H1 (cell line): ENCODE measurements at regions of chr18 and their contacts with region 1.

Region 1: DNA sequence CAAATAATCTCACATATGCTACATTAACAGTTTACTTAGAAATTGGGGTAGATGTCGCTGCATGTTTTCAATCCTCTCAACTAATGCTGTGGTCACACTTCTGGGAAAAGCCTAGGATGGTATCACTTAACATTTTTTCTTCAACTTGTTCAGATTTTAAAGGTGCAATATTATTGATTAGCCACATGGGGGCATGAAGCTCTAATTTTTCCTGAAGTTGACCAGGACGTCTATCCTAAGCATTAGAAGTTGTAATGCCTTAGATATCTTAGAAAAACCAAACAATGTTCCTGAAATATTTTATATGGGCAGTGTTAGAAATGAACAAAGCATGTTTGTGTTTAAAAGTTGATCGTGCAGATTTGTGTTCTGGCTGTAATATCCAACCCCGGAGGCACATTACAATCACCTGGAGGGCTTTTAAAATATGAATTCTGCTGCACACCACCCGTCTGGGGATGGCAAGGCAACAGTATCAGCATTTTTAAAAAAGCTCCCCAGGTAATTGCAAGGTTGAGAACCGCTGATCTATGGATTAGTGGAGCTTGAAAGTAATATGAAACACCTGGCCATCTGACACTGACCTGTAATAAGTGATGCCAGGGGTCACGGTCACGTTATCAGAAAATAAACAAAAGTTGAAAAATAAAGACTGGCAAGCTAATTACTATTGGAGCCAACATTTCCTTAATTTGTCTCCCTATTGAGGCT is 100.5 kb upstream of the LMAN1 start:
- DNase-seq: no peak
- H3K4me3 ChIP-seq: no peak overlapping the region
- H3K27ac ChIP-seq: no peak overlapping the region
- H3K4me1 ChIP-seq: peaks cover 0 to 2% (median 0%) of the 10 kb centered on the region in 4 experiments; a peak in 1 of 7 replicates
- H3K27me3 ChIP-seq: no peaks in the 10 kb centered on the region
- CTCF ChIP-seq: peak in 2 of 3 experiments; percentile 25 to 60; a peak in 2 of 4 replicates
- EP300 ChIP-seq: no peak
- POLR2A ChIP-seq: no peak
- RAD21 ChIP-seq: peak; percentile 71 to 76

Region 2: DNA sequence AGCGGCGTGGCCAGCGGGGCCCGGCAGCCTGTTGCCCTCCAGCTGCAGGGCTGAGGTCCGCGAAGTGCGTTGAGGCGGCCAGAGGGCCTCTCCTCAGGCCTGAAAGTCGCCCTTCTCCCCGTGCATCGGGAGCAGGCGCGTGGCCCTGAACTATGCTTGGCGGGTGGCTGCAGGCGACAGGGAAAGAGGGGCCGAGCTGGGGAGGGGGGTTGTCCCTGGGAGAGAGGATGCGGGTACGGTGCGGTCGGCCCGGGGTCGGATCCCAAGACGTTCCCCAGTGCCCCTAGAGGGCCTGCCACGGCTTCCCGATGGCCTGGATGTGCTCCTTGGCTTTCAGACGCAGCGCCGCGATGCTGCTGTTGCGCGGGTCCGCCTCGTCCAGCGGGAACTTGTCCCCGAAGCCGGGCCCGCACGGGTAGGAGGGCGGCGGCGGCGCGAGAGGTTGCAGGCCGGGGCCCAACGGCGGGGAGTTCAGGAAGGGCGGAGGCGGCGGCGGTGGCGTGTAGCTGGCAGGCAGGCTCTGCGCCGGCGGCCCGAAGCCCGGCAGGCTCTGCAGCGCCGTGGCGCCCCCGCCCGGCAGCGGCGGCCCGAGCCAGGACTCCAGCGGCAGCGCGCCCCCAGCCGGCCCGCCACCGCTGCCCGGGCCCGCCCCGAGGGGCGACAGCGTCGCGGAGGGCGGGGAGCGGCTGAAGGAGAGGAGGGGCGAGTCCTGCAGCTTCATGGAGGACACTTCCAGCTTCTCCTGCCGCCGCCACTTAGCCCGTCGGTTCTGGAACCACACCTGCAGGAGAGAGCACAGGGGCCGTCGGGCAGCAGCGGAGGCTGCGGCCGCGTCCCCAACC is 190.6 kb before region 1 on chr18:
- CTCF ChIA-PET with region 1: no interaction called
- POLR2A ChIA-PET with region 1: no interaction called
- DNase-seq: peak in 1 of 2 experiments; percentile 89
- H3K4me3 ChIP-seq: peak overlapping the region; percentile 51 to 67 (median 61)
- H3K27ac ChIP-seq: no peak overlapping the region
- H3K4me1 ChIP-seq: peaks cover 0 to 44% (median 24%) of the 10 kb centered on the region in 4 experiments; a peak in 6 of 7 replicates
- H3K27me3 ChIP-seq: peaks cover 88 to 98% (median 93%) of the 10 kb centered on the region in 4 experiments
- CTCF ChIP-seq: peak in 2 of 3 experiments; percentile 52 to 92; a peak in 3 of 4 replicates
- EP300 ChIP-seq: no peak
- POLR2A ChIP-seq: no peak
- RAD21 ChIP-seq: peak in 1 of 2 experiments; percentile 47; a peak in 2 of 4 replicates

Region 3: DNA sequence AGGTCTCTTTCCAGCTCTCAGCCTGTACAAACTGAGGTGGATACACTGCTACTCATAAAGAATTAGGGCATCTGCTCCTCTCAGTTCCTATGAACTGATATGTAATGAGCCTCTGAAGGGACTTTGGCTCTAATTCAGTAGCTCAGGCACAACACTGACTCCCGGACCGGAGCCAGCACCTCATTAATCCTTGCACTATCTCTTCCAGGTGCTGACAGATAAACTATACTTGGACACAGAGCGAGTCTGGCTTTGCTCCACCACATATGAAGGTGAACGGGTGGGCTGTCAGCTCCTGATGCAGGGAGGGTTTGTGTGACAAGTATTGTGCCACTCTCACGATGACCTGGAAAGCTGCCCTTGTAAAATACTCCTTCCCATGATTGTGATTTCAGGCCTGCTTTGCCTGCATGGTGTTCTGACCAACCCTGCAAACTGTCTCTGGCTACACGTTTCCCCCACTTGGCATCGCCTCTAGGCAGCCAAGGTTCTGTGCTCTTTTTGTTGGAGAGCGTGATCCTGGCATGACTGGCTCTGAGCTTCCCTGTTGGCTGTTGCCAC is 11.1 kb after region 1 on chr18:
- CTCF ChIA-PET with region 1: interaction called, 84 read pairs
- POLR2A ChIA-PET with region 1: no interaction called
- DNase-seq: no peak
- H3K4me3 ChIP-seq: no peak overlapping the region
- H3K27ac ChIP-seq: no peak overlapping the region
- H3K4me1 ChIP-seq: no peaks in the 10 kb centered on the region; a peak in 1 of 7 replicates
- H3K27me3 ChIP-seq: no peaks in the 10 kb centered on the region
- CTCF ChIP-seq: no peak
- EP300 ChIP-seq: no peak
- POLR2A ChIP-seq: no peak
- RAD21 ChIP-seq: no peak

Region 4: DNA sequence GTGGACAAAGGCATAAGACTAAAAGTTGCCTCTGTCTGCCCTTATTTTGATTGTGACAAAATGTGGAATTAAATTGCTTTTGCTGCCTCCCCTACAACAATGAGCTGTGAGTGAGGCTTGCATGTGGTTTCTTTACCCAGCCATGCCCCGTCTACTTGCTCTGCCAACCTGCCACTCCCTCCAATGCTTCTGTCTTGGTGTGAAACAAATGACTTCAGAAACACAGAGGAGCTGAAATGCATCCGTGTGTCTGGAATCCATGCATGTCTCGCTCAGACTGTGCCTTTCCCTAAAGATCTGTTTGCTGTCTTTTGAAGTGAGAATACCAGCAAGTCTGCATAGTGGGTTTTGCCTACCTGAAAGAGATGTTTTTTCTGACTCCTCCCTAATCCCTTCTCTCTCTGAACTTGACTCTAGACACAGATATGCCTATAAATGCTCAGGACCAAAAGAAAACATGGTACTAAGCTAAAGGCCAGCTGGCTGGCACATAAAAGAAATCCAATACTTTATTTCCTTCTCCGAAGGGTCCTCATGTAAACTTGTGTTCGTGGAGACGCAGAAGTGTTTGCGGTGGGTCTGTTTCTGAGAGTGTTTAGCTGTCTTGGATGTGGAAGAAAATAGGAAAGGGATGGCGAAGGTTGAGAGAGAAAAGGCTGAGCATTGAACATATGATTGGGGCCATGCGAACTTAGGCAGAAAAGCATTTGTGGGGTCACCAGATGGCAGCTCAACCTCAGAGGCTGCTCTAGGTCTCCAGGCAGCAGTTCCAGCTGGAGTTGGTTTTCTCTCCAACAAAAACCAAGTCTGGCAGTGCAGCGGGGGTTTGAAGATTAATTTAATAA is 117.2 kb after region 1 on chr18:
- CTCF ChIA-PET with region 1: interaction called, 12 read pairs
- POLR2A ChIA-PET with region 1: no interaction called
- DNase-seq: no peak
- H3K4me3 ChIP-seq: no peak overlapping the region
- H3K27ac ChIP-seq: no peak overlapping the region
- H3K4me1 ChIP-seq: no peaks in the 10 kb centered on the region
- H3K27me3 ChIP-seq: no peaks in the 10 kb centered on the region
- CTCF ChIP-seq: no peak
- EP300 ChIP-seq: no peak
- POLR2A ChIP-seq: no peak
- RAD21 ChIP-seq: no peak

Region 5: DNA sequence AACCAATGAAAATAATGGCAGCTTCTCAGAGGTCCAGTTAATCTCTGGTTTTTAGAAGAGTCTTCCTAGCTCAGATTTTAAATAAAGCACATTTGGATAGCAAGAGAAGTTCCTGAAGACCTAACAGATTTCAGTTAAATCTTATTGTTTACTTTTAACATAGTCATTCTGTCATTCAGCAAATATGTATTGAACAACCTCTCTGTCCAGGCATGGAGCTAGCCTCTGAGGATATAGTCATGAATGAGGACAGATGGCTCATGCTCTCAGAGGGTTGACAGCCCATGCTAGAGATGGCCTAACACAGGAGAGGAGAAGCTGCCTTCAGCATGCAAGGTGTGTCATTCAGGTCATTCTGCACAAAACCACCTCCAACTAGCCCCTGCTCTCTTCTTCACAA is 231.5 kb after region 1 on chr18:
- CTCF ChIA-PET with region 1: interaction called, 12 read pairs
- POLR2A ChIA-PET with region 1: no interaction called
- DNase-seq: no peak
- H3K4me3 ChIP-seq: no peak overlapping the region
- H3K27ac ChIP-seq: no peak overlapping the region
- H3K4me1 ChIP-seq: peaks cover 4 to 32% (median 21%) of the 10 kb centered on the region in 4 experiments
- H3K27me3 ChIP-seq: peaks cover 7 to 28% (median 13%) of the 10 kb centered on the region in 4 experiments
- CTCF ChIP-seq: no peak
- EP300 ChIP-seq: no peak
- POLR2A ChIP-seq: no peak
- RAD21 ChIP-seq: no peak

Region 6: GRCh38 chr18:59707306-59707705 is 247.8 kb after region 1 on chr18:
- CTCF ChIA-PET with region 1: interaction called, 11 read pairs
- POLR2A ChIA-PET with region 1: no interaction called
- DNase-seq: no peak
- H3K4me3 ChIP-seq: no peak overlapping the region
- H3K27ac ChIP-seq: no peak overlapping the region
- H3K4me1 ChIP-seq: peaks cover 0 to 4% (median 2%) of the 10 kb centered on the region in 4 experiments; a peak in 4 of 7 replicates
- H3K27me3 ChIP-seq: no peaks in the 10 kb centered on the region
- CTCF ChIP-seq: no peak
- EP300 ChIP-seq: no peak
- POLR2A ChIP-seq: no peak
- RAD21 ChIP-seq: no peak